Tibial artery (tissue), 4 donors: ENCODE measurements at regions of chr10 and their contacts with region 1.

Region 1: DNA sequence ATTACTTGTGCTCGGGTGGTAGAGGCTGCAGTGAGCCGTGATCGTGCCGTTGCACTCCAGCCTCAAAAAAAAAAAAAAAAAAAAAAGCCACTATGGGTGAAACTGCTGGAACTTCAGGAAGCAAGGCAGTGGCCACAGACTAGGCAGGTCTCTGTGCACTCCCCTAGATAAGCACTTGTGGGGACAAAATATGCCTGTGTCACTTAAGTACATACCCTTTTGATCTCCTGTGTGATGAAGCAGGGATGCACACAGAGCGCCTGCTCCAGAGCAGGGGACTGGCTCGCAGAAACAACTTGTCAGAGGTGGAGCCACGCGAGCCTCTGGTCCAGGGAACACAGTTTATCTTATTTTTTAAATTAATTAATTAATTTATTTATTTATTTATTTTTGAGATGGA is 42.9 kb upstream of the PSAP start:
- DNase-seq: no peak
- H3K4me3 ChIP-seq: no peak overlapping the region
- H3K27ac ChIP-seq: no peak overlapping the region
- H3K4me1 ChIP-seq: peaks cover 0 to 7% (median 6%) of the 10 kb centered on the region in 4 donors
- H3K27me3 ChIP-seq: no peaks in the 10 kb centered on the region
- CTCF ChIP-seq: no peak

Region 2: DNA sequence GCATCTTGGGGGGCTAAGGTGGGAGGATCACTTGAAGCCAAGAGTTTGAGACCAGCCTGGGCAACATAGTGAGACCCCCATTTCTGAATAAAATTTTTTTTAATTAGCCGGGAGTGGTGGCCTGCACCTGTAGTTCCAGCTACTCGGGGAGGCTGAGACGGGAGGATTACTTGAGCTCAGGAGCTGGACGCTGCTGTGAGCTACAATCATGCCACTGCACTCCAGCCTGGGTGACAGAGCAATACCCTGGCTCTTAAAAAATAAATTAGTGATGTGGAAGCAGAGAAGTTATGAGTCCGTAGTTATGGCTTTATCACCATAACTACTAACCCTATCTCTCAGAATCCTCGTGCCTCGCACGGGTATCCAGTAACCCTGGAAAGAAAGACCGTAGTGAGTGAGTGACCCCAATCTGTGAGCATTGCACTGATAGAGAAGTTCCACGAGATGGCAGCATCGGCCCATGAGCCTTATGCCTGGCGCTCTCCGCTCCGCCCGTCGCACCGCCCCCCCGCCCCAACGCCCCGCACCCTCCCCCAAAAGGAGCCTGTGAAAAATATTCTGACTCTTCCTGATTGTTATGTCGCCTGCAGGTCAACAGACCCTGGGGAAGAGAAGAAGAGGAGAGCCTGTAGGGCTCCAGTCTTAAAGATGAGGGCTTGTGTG is 579.8 kb before region 1 on chr10:
- intact Hi-C with region 1: loop called (anchors 5 kb)
- DNase-seq: no peak
- H3K4me3 ChIP-seq: peak overlapping the region in 1 of 2 donors; percentile 20
- H3K27ac ChIP-seq: no peak overlapping the region
- H3K4me1 ChIP-seq: peaks cover 0 to 22% (median 10%) of the 10 kb centered on the region in 4 donors
- H3K27me3 ChIP-seq: peaks cover 0 to 3% of the 10 kb centered on the region in 2 donors
- CTCF ChIP-seq: peak; percentile 74 to 95

Region 3: GRCh38 chr10:71708301-71708703 is 185.6 kb before region 1 on chr10:
- intact Hi-C with region 1: loop called (anchors 10 kb)
- DNase-seq: no peak
- H3K4me3 ChIP-seq: no peak overlapping the region
- H3K27ac ChIP-seq: no peak overlapping the region
- H3K4me1 ChIP-seq: peaks cover 0 to 8% (median 8%) of the 10 kb centered on the region in 4 donors
- H3K27me3 ChIP-seq: no peaks in the 10 kb centered on the region
- CTCF ChIP-seq: peak; percentile 63 to 65

Region 4: DNA sequence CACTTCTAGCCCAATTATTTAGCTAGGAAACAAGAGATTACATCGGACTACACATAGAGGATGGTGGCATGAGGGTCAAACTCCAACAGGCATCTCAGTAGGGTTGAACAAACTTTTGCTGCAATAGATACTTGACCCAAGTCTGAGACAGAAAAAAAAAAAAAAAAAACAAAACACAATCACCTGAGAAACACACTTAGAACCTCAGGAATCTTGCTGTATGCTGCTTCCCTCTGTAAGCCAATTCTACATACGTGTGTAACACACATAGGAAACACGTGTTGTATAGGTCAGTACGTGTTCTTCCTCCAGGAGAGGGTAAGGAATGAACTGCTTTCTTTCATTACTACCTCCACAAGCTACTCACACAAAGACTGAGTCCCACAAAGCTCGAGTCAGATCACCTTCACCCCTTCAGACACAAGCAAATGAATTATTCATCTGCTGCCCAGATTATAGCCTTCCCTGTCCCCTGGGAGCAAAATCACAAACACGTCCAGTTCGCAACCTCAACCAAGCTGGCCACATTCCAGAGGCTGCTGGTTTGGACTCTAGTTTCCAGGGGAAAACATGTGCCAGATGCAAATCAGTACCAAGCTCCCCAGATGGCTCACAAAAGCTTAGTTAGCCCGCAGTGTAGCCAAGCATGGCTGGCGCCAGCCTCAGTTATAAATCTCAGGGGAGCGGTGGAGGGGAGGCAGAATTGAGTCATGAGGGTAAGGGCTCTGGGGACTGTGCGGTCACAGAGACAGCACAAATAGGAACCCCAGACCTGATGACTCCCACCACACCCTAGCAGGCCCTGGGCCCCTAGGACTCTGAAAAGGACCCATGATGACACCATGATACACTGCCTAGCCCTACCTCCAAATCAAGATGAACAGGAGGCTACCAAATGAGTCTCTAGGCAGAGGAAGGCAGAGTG is 58.0 kb before region 1 on chr10:
- intact Hi-C with region 1: loop called (anchors 10 kb)
- DNase-seq: peak; percentile 87 to 96
- H3K4me3 ChIP-seq: no peak overlapping the region
- H3K27ac ChIP-seq: peak overlapping the region; percentile 85
- H3K4me1 ChIP-seq: peaks cover 0 to 72% (median 54%) of the 10 kb centered on the region in 4 donors
- H3K27me3 ChIP-seq: no peaks in the 10 kb centered on the region
- CTCF ChIP-seq: no peak

Region 5: GRCh38 chr10:72097448-72098300 is 203.8 kb after region 1 on chr10:
- intact Hi-C with region 1: no loop called
- DNase-seq: no peak
- H3K4me3 ChIP-seq: no peak overlapping the region
- H3K27ac ChIP-seq: no peak overlapping the region
- H3K4me1 ChIP-seq: peaks cover 0 to 4% (median 1%) of the 10 kb centered on the region in 4 donors
- H3K27me3 ChIP-seq: no peaks in the 10 kb centered on the region
- CTCF ChIP-seq: no peak

Region 6: DNA sequence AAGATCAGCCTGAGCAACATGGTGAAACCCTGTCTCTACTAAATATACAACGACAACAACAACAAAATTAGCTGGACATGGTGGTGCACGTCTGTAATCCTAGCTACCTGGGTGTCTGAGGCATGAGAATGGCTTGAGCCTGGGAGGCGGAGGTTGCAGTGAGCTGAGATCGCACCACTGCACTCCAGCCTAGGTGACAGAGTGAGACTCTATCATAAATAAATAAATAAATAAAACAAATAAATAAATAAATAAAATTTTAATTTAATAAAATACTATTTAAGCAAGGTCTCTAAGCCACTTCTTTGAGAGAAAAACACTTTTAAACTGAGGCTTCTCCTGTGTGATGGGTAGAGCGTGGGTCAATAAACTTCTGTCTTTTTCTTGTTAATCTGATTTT is 693.6 kb after region 1 on chr10:
- intact Hi-C with region 1: no loop called
- DNase-seq: no peak
- H3K4me3 ChIP-seq: no peak overlapping the region
- H3K27ac ChIP-seq: no peak overlapping the region
- H3K4me1 ChIP-seq: no peaks in the 10 kb centered on the region
- H3K27me3 ChIP-seq: no peaks in the 10 kb centered on the region
- CTCF ChIP-seq: no peak